GM12878 (cell line): ENCODE measurements at regions of chr4 and their contacts with region 1.

Region 1: DNA sequence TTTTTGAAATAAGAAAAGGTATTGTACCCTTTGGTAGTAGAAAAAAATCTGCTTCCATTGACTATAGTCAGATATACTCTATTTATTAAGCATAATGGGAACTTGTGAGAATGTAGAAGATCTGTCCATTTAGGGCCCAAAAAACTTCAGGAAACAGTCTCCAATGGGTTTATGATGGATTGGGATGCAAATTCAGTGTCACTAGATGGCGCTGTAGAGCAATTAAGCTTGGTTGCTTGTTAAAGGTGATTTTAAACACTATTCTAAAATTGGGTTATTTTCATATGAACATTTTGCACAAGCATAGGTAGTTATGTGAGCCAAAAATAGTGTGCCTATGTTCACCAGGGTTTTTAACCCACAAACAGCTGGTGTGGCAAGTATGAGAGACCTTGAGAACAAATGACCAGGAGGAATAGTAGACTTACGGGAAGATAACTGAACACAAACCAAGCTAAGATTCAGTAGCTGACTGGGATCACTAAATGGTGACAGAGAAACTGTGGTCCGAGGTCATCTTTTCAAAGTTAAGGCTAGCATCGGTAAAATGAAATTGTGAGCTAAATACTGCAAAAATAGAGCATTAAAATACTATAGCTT is 80.3 kb upstream of the LSM6 start:
- DNase-seq: no peak
- ATAC-seq: no peak
- H3K4me3 ChIP-seq: no peak overlapping the region
- H3K27ac ChIP-seq: no peak overlapping the region; the same call in 1 of the 2 replicates
- H3K4me1 ChIP-seq: peaks cover 42% of the 10 kb centered on the region
- H3K27me3 ChIP-seq: no peaks in the 10 kb centered on the region
- CTCF ChIP-seq: peak; percentile 66 to 77 (median 77)
- EP300 ChIP-seq: no peak
- POLR2A ChIP-seq: no peak
- RAD21 ChIP-seq: peak; percentile 73

Region 2: DNA sequence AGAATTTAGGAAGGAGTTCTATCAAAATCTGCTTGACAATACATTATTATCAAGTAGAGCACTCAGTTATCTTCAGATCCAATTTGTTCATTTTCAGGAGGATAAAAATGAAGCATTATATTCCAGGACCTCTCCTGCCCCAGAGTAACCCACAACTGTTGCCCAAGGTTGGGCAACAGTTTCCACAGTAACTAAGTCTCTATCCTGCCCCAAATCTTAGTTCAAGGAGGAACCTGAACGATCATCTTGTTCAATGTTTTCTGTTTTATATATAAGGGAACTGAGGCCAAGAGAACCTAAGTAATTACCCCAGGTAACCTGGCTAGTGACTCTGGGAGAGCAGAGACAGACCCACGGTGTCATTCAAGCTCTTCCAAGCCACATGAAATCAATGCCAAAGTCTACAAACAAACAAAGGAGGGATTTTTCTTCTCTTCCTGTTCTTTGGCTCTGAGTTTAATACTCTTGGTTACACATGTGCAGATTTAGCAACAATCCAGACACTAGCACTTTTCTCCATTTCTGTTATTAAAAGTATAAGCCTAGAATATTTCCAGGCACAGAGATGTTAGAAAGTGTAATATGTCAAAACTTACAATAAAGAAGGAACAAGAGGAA is 309.7 kb before region 1 on chr4:
- CTCF ChIA-PET with region 1: no interaction called
- POLR2A ChIA-PET with region 1: no interaction called
- RAD21 ChIA-PET with region 1: no interaction called
- SMC1A ChIA-PET with region 1: no interaction called
- in situ Hi-C with region 1: no loop called
- intact Hi-C with region 1: no loop called
- DNase-seq: no peak
- ATAC-seq: no peak
- H3K4me3 ChIP-seq: no peak overlapping the region
- H3K27ac ChIP-seq: no peak overlapping the region
- H3K4me1 ChIP-seq: no peaks in the 10 kb centered on the region
- H3K27me3 ChIP-seq: no peaks in the 10 kb centered on the region
- CTCF ChIP-seq: no peak
- EP300 ChIP-seq: no peak
- POLR2A ChIP-seq: no peak
- RAD21 ChIP-seq: no peak

Region 3: GRCh38 chr4:145956288-145956890 is 138.8 kb before region 1 on chr4:
- CTCF ChIA-PET with region 1: interaction called, 5 read pairs
- POLR2A ChIA-PET with region 1: no interaction called
- RAD21 ChIA-PET with region 1: no interaction called
- SMC1A ChIA-PET with region 1: no interaction called
- in situ Hi-C with region 1: no loop called
- intact Hi-C with region 1: loop called (anchors 5 kb)
- DNase-seq: no peak
- ATAC-seq: peak; percentile 86
- H3K4me3 ChIP-seq: no peak overlapping the region
- H3K27ac ChIP-seq: no peak overlapping the region
- H3K4me1 ChIP-seq: no peaks in the 10 kb centered on the region
- H3K27me3 ChIP-seq: no peaks in the 10 kb centered on the region
- CTCF ChIP-seq: peak; percentile 67 to 78 (median 78)
- EP300 ChIP-seq: no peak
- POLR2A ChIP-seq: no peak
- RAD21 ChIP-seq: peak; percentile 75

Region 4: GRCh38 chr4:146059865-146060264 is 35.3 kb before region 1 on chr4:
- CTCF ChIA-PET with region 1: interaction called, 15 read pairs
- POLR2A ChIA-PET with region 1: no interaction called
- RAD21 ChIA-PET with region 1: interaction called, 6 read pairs
- SMC1A ChIA-PET with region 1: interaction called, 26 read pairs
- in situ Hi-C with region 1: no loop called
- intact Hi-C with region 1: loop called (anchors 5 kb)
- DNase-seq: peak; percentile 84
- ATAC-seq: peak; percentile 86
- H3K4me3 ChIP-seq: no peak overlapping the region
- H3K27ac ChIP-seq: peak overlapping the region; percentile 86
- H3K4me1 ChIP-seq: peaks cover 50% of the 10 kb centered on the region
- H3K27me3 ChIP-seq: no peaks in the 10 kb centered on the region
- CTCF ChIP-seq: no peak
- EP300 ChIP-seq: peak; percentile 31 to 73; a peak in 3 of 4 replicates
- POLR2A ChIP-seq: 0 out of 2 replicates have a peak, but pooled peaks have one; percentile 24
- RAD21 ChIP-seq: peak; percentile 23; the same call in 1 of the 2 replicates

Region 5: DNA sequence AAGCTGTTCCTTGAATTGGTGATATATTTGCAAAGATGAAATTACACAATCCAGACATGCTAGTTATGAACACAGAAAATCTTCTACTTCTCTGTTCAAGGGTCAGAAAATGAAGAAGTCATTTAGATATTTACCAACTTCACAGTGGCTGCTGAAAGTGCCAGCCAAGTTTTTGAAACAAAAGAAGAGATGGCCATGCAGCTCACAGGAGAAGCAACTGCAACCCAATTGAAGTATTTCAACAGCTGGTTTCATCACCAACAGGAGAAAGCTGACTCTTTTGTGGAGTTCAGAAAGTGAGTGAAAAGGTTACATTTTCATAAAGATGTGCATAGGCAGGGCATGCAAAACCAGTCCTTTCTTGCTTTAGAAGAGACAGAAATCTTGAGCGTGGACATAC is 10.3 kb after region 1 on chr4:
- CTCF ChIA-PET with region 1: interaction called, 24 read pairs
- POLR2A ChIA-PET with region 1: no interaction called
- RAD21 ChIA-PET with region 1: interaction called, 3 read pairs
- SMC1A ChIA-PET with region 1: interaction called, 4 read pairs
- in situ Hi-C with region 1: no loop called
- intact Hi-C with region 1: no loop called
- DNase-seq: no peak
- ATAC-seq: peak; percentile 56
- H3K4me3 ChIP-seq: no peak overlapping the region
- H3K27ac ChIP-seq: peak overlapping the region; percentile 66
- H3K4me1 ChIP-seq: peaks cover 25% of the 10 kb centered on the region
- H3K27me3 ChIP-seq: no peaks in the 10 kb centered on the region
- CTCF ChIP-seq: no peak
- EP300 ChIP-seq: no peak
- POLR2A ChIP-seq: no peak
- RAD21 ChIP-seq: no peak

Region 6: GRCh38 chr4:146124023-146124662 is 29.0 kb after region 1 on chr4:
- CTCF ChIA-PET with region 1: interaction called, 11 read pairs
- POLR2A ChIA-PET with region 1: no interaction called
- RAD21 ChIA-PET with region 1: interaction called, 9 read pairs
- SMC1A ChIA-PET with region 1: interaction called, 6 read pairs
- in situ Hi-C with region 1: no loop called
- intact Hi-C with region 1: no loop called
- DNase-seq: no peak
- ATAC-seq: peak; percentile 93
- H3K4me3 ChIP-seq: no peak overlapping the region
- H3K27ac ChIP-seq: no peak overlapping the region
- H3K4me1 ChIP-seq: peaks cover 8% of the 10 kb centered on the region
- H3K27me3 ChIP-seq: no peaks in the 10 kb centered on the region
- CTCF ChIP-seq: peak in 2 of 3 experiments; percentile 3 to 32; a peak in 2 of 6 replicates
- EP300 ChIP-seq: no peak
- POLR2A ChIP-seq: no peak
- RAD21 ChIP-seq: peak; percentile 21; the same call in 1 of the 2 replicates

Region 7: DNA sequence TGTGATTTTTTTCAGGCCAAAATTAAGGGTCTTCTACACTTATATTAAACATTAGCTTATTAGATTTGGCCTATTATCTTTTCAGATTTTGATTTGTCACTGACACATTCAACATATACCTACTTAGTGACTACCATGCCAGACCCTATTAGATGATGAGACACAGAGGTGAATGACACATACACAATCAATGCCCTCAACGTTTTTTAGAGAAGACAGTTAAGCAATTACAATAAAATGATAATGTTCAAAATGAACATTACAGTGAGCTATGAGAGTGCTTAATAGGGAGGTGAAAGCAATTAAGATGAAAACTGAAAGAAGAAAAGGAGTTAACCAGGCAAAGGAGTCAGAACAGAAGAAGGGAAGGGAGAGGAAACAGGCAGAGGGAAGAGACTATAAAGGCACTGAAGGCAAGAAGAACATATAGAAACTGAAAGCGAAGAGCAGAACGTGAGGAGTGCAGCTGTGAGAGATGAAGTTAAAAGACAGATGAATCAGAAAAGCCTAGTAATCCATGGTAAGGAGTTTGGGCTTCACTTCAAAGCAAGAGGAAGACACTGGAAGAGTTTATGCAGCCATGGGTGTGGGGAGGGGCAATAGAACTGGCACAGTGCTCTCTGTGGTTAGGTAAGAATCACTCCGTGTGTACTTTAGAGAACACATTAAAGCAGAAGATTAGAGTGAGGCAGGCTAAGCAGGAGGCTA is 238.2 kb after region 1 on chr4:
- CTCF ChIA-PET with region 1: interaction called, 5 read pairs
- POLR2A ChIA-PET with region 1: no interaction called
- RAD21 ChIA-PET with region 1: interaction called, 4 read pairs
- SMC1A ChIA-PET with region 1: interaction called, 6 read pairs
- in situ Hi-C with region 1: no loop called
- intact Hi-C with region 1: loop called (anchors 5 kb)
- DNase-seq: peak; percentile 59
- ATAC-seq: peak; percentile 88
- H3K4me3 ChIP-seq: peak overlapping the region; percentile 54
- H3K27ac ChIP-seq: peak overlapping the region; percentile 38
- H3K4me1 ChIP-seq: peaks cover 13% of the 10 kb centered on the region; the same call in 1 of the 2 replicates
- H3K27me3 ChIP-seq: no peaks in the 10 kb centered on the region
- CTCF ChIP-seq: no peak
- EP300 ChIP-seq: no peak
- POLR2A ChIP-seq: no peak
- RAD21 ChIP-seq: no peak

Region 8: GRCh38 chr4:146916479-146917076 is 821.4 kb after region 1 on chr4:
- CTCF ChIA-PET with region 1: interaction called, 6 read pairs
- POLR2A ChIA-PET with region 1: no interaction called
- RAD21 ChIA-PET with region 1: interaction called, 5 read pairs
- SMC1A ChIA-PET with region 1: interaction called, 4 read pairs
- in situ Hi-C with region 1: no loop called
- intact Hi-C with region 1: loop called (anchors 10 kb)
- DNase-seq: peak; percentile 2
- ATAC-seq: 0 out of 3 replicates have a peak, but pooled peaks have one; percentile 27
- H3K4me3 ChIP-seq: no peak overlapping the region
- H3K27ac ChIP-seq: no peak overlapping the region
- H3K4me1 ChIP-seq: no peaks in the 10 kb centered on the region
- H3K27me3 ChIP-seq: no peaks in the 10 kb centered on the region
- CTCF ChIP-seq: peak; percentile 57 to 65 (median 63)
- EP300 ChIP-seq: no peak
- POLR2A ChIP-seq: no peak
- RAD21 ChIP-seq: peak; percentile 86